ENCODE measurements at regions of chr19 and their contacts with region 1.

Region 1: DNA sequence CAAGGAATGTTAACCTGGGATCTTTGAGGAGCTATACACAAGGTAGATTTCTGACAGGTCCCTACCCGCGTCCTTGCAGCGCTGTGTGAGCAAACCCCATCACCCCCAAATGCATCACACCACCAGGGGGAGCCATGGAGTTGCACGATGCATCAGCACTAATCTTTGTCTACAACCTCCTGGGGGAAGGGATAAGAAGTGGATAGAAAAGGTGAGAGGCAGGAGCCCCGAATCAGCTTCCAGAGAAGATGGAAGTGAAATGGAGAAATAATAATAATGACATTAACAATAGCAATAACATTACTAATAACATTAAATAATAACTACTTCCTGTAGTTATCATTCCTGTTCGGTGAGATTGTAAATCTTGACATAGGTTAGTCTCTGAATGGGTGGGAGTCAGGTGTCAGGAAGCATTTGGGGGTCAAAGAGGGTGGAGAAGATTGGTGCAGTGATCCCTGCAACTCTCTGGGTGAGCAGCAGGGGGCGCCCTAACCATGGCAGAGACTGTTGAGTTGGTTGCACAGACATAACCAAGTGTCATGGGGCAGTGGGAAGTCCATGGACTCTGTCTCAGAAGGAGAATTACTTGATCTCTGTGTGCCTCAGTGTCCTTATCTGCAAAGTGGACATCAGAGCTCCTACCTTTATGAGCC is 16.5 kb downstream of the SIGLEC7 start:
- H3K4me3 ChIP-seq: no peak overlapping the region
- H3K27ac ChIP-seq: no peak overlapping the region
- H3K4me1 ChIP-seq: no peaks in the 10 kb centered on the region
- CTCF ChIP-seq: peak; percentile 44

Region 2: GRCh38 chr19:51147663-51148062 is 10.9 kb before region 1 on chr19:
- CTCF ChIA-PET with region 1: interaction called, 48 read pairs
- POLR2A ChIA-PET with region 1: no interaction called
- H3K4me3 ChIP-seq: no peak overlapping the region
- H3K27ac ChIP-seq: no peak overlapping the region
- H3K4me1 ChIP-seq: no peaks in the 10 kb centered on the region
- CTCF ChIP-seq: no peak

Region 3: DNA sequence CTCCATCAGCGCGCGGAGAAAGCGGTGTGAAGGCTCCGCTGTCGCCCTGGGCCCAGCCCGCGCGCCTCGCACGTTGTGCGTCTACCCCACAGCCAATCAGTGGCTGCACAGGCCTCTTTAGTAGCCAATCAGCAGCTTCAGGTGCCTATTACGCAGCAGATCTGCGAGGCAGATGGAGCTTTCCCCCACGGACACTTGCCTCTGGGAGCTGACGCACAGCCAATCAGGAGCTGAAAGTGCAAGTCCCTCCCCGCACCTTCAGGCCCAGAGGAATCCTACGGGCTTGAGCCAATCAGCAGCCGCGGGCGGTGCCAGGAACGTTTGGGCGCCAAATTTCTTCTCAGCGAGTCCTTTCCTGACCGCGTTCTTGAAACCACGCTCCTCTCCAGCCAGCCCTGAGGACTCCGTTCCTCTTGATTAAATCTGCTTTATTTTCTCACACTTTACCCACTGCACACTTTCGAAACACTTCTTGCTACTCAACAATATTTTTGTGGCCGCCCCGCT is 23.4 kb after region 1 on chr19:
- CTCF ChIA-PET with region 1: interaction called, 15 read pairs
- POLR2A ChIA-PET with region 1: no interaction called
- H3K4me3 ChIP-seq: no peak overlapping the region
- H3K27ac ChIP-seq: no peak overlapping the region
- H3K4me1 ChIP-seq: no peaks in the 10 kb centered on the region
- CTCF ChIP-seq: no peak

Region 4: DNA sequence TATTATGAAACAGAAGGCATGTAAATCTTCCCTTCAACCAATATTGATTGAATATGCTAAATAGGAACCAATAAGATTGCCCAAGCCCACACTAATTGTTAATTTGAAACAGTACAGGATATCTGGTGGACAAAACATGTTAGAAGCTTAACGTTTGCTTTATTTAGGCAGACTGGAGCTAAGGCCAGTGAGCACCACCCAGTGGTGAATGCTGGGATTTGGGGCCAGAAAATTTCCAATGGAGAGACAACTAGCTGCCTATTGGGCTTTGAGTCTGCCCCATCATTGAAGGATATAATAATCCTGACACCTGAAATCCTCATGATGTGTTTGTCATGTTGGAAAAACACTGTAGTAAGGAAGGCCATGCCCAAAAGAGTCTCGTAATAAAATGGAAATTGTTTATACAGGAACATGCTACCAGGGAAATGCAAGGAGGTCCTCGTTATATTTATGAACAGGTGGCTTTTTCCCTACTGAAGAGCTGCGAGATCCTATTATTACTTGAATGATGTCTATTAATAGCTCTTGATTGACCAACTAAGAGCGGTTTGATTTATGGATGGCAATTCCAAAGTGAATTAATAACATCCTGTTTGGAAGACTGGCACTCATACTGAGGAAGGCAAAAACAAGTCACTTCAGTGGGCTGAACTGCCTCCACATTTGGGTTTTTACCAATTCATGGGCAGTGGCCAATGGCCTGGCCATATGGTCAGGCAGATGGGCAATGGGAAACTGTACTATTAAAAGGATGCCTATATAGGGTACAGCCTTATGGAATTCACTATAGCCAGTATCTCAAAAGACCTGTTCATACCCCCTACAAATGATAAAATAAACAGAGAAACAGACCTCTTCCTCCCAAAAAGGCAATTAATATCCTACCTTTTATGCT is 101.0 kb after region 1 on chr19:
- CTCF ChIA-PET with region 1: interaction called, 57 read pairs
- POLR2A ChIA-PET with region 1: no interaction called
- H3K4me3 ChIP-seq: no peak overlapping the region
- H3K27ac ChIP-seq: no peak overlapping the region
- H3K4me1 ChIP-seq: no peaks in the 10 kb centered on the region
- CTCF ChIP-seq: 0 out of 2 replicates have a peak, but pooled peaks have one; percentile 45